ENCODE measurements at regions of chr20 and their contacts with region 1.

Region 1: GRCh38 chr20:25178563-25179438 is 16.7 kb upstream of the ENTPD6 start:
- DNase-seq: no peak
- ATAC-seq: peak; percentile 85

Region 2: GRCh38 chr20:25076731-25077609 is 101.8 kb before region 1 on chr20:
- intact Hi-C with region 1: loop called in 1 of 2 experiments (anchors 5 kb)
- DNase-seq: peak in 1 of 2 donors; percentile 26
- ATAC-seq: peak; percentile 49

Measured in left colon (tissue), 2 donors.